H1 (cell line): ENCODE measurements at regions of chr12 and their contacts with region 1.

Region 1: GRCh38 chr12:45268672-45269411 is 52.9 kb downstream of the ANO6 start:
- DNase-seq: no peak
- H3K4me3 ChIP-seq: no peak overlapping the region
- H3K27ac ChIP-seq: no peak overlapping the region
- H3K4me1 ChIP-seq: peaks cover 0 to 11% (median 4%) of the 10 kb centered on the region in 4 experiments; a peak in 3 of 7 replicates
- H3K27me3 ChIP-seq: no peaks in the 10 kb centered on the region
- CTCF ChIP-seq: peak in 2 of 3 experiments; percentile 14 to 36; a peak in 2 of 4 replicates
- EP300 ChIP-seq: no peak
- POLR2A ChIP-seq: no peak
- RAD21 ChIP-seq: peak; percentile 53 to 60

Region 2: GRCh38 chr12:45246236-45246635 is 22.6 kb before region 1 on chr12:
- CTCF ChIA-PET with region 1: interaction called, 10 read pairs
- POLR2A ChIA-PET with region 1: interaction called, 3 read pairs
- DNase-seq: no peak
- H3K4me3 ChIP-seq: no peak overlapping the region
- H3K27ac ChIP-seq: no peak overlapping the region
- H3K4me1 ChIP-seq: peaks cover 0 to 6% (median 1%) of the 10 kb centered on the region in 4 experiments; a peak in 2 of 7 replicates
- H3K27me3 ChIP-seq: no peaks in the 10 kb centered on the region
- CTCF ChIP-seq: no peak
- EP300 ChIP-seq: no peak
- POLR2A ChIP-seq: no peak
- RAD21 ChIP-seq: no peak

Region 3: DNA sequence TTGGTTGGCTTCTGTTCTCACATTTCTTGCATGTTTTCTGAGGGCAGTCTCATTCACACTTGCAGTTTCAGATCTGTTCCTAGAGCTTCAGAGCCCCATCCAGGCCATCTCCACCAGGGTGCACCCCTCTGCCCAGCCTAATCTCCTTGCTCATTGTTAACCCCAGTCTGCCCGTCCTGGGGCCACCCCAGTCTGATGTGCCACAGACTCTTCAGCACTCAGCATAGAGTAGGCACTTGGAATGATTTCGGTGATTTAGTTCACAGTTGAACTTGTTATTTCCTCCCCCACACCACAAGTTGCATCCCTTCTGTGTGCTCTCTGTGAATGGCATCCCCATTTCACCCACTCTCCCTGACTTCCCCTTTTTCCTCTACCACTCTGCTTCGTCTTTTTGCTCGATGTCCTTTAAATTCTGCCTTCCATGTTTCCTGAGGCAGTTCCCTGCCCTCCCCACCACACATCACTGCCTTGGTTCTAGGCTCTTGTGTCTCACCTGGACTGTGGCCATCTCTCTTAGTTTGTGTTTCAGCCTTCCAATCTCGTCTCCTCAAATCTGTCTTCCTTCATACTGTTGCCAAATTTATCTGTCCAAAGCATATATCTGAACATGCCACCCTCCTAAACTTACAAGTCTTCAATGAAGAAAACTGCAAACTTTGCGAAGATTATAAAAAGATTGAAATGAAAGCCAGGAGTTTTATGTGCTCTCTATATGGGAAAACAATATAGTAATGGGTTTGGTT is 11.5 kb before region 1 on chr12:
- CTCF ChIA-PET with region 1: interaction called, 12 read pairs
- POLR2A ChIA-PET with region 1: no interaction called
- DNase-seq: no peak
- H3K4me3 ChIP-seq: no peak overlapping the region
- H3K27ac ChIP-seq: no peak overlapping the region
- H3K4me1 ChIP-seq: peaks cover 3 to 9% (median 7%) of the 10 kb centered on the region in 4 experiments; a peak in 6 of 7 replicates
- H3K27me3 ChIP-seq: no peaks in the 10 kb centered on the region
- CTCF ChIP-seq: 0 out of 4 replicates have a peak, but pooled peaks of 1 of the 3 experiments have one; percentile 3
- EP300 ChIP-seq: no peak
- POLR2A ChIP-seq: no peak
- RAD21 ChIP-seq: no peak; a peak in 1 of 4 replicates

Region 4: DNA sequence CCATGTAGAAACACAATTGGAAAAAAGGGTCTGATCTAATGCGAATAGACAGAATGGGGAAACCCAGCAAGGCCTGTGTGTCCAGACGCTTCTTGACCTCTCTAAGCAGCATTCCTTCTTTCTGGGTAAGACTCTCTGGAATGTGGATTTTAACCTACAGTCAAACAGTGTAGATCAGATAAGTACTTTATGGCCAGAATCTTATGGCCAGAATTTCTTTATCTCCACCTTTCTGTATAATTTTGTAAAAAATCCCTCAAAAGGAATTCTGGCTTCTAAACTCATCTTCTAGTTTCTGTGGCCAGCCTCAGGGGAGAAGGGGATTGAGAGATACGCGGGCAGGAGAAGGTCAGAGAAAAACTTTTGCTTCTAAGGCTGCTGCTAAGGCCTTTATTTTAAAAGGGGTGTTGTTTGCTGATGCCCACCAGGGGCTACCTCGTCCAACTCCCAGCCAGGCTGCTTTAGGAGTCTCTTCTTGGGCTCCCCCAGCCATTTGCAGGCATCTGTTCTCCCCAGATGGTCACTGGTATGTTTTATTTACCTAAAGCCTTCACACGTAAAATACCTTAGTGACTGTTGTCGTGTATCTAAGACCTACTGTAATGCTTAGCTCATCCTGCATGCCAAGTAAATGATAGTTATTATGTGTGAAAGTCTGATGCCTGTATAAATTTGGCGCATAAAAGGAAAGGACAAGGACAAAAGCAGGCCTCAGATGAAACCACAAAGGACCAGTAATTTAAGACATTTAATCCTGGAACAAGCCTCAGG is 15.5 kb after region 1 on chr12:
- CTCF ChIA-PET with region 1: interaction called, 13 read pairs
- POLR2A ChIA-PET with region 1: interaction called, 3 read pairs
- DNase-seq: no peak
- H3K4me3 ChIP-seq: no peak overlapping the region
- H3K27ac ChIP-seq: no peak overlapping the region
- H3K4me1 ChIP-seq: peaks cover 2 to 9% (median 6%) of the 10 kb centered on the region in 4 experiments; a peak in 4 of 7 replicates
- H3K27me3 ChIP-seq: no peaks in the 10 kb centered on the region
- CTCF ChIP-seq: peak; percentile 10 to 33 (median 33)
- EP300 ChIP-seq: no peak
- POLR2A ChIP-seq: no peak
- RAD21 ChIP-seq: peak; percentile 44 to 54

Region 5: DNA sequence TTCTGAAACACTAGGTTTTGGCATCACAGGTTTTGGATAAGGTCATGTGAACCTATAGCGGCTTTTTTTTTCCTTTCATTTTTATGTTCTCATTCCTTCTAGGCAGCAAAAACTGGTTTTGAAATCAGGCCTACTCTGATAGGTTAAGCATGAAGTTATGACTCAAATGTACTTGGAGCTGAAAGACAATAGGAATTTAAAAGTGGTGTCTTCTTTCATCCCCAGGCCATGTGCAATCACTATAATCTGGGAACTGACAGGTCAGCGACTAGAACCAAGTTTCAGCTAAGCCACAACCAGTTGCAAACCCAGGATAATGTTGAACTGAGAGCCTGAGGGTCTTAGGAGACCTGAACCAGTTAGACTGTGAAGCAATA is 21.4 kb after region 1 on chr12:
- CTCF ChIA-PET with region 1: interaction called, 13 read pairs
- POLR2A ChIA-PET with region 1: interaction called, 3 read pairs
- DNase-seq: no peak
- H3K4me3 ChIP-seq: no peak overlapping the region
- H3K27ac ChIP-seq: no peak overlapping the region
- H3K4me1 ChIP-seq: peaks cover 0 to 6% (median 2%) of the 10 kb centered on the region in 4 experiments; a peak in 2 of 7 replicates
- H3K27me3 ChIP-seq: no peaks in the 10 kb centered on the region
- CTCF ChIP-seq: no peak
- EP300 ChIP-seq: no peak
- POLR2A ChIP-seq: no peak
- RAD21 ChIP-seq: no peak